ENCODE measurements at regions of chr12 and their contacts with region 1.

Region 1: DNA sequence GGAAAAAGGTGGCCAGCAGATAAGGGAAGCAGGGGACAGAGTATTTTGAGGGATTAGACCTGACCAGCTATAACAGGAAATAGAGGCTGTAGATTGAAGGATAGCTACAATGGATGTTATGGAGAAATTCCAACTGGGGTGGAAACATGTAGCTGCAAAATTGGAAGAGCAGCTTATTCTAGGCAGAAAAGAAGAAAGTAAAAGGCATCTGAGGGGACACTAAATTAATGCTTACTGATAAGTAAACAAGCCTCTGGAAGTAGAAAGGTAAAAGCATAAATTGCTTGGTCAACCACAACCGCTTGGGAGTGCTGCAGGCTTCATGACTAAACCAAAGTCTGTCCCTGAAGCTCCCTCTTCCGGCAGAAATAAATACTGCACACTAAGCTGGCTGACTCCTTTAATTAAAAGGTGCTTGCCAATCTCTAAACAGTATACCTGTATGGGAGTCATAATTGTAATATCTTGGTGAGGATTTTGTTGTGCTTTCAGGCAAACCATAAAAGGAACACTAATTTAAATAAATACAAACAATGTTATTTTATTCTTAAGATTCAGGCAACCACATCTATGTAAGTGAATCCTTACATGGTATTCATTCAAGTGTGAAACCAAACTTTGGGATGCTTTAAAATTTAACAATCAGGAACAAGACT is 7.7 kb downstream of the UBC start:
- DNase-seq: peak; percentile 93
- ATAC-seq: peak; percentile 88
- H3K4me3 Mint-ChIP-seq: no peak overlapping the region
- H3K27ac Mint-ChIP-seq: peak overlapping the region; percentile 28
- H3K4me1 Mint-ChIP-seq: peaks cover 25% of the 10 kb centered on the region
- H3K27me3 Mint-ChIP-seq: no peaks in the 10 kb centered on the region

Region 2: GRCh38 chr12:124655698-124656516 is 250.8 kb before region 1 on chr12:
- CTCF ChIA-PET with region 1: no interaction called
- POLR2A ChIA-PET with region 1: no interaction called
- intact Hi-C with region 1: no loop called
- DNase-seq: no peak
- ATAC-seq: no peak
- H3K4me3 Mint-ChIP-seq: no peak overlapping the region
- H3K27ac Mint-ChIP-seq: no peak overlapping the region
- H3K4me1 Mint-ChIP-seq: no peaks in the 10 kb centered on the region
- H3K27me3 Mint-ChIP-seq: peaks cover 3% of the 10 kb centered on the region

Region 3: DNA sequence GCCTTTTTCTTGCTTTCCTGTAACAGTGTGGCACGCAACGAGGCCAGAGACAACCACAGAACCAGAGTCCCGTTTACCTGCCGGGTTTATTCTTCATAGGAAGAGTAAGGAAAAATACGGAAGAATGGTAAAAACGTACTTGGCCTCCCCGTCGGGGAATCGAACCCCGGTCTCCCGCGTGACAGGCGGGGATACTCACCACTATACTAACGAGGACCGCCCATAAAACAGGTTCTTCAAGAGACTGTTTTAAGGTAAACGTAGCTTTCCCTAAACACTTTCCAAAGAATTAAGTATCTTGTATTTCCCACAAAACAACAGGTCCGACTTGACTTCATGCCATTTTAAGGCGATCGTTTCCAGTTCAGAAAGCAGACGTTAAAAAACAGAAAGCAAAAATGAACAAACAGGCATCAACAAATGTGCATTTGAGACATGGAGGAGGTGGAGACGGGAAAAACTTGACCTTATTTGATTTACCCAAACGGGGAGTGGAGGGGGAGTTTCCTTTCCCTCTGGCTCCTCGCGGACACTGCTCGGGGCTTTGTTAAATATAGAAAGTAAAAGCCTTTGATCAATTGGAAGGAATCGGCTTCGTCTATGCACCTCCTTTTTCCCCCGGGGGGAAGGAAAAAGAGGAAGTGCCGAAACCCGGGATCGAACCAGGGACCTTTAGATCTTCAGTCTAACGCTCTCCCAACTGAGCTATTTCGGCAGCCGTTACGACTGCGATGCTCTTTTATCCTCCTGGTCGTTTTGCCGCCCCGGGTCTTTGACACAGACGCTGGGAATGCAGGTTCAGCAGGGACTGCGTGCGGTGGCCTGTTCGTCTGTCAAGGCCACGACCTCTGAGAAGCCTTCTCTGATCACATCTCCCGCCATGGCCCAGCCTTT is 20.7 kb after region 1 on chr12:
- CTCF ChIA-PET with region 1: interaction called, 70 read pairs
- POLR2A ChIA-PET with region 1: interaction called, 8 read pairs
- intact Hi-C with region 1: no loop called
- DNase-seq: peak; percentile 96
- ATAC-seq: peak; percentile 81
- H3K4me3 Mint-ChIP-seq: peak overlapping the region; percentile 98
- H3K27ac Mint-ChIP-seq: peak overlapping the region; percentile 97
- H3K4me1 Mint-ChIP-seq: peaks cover 33% of the 10 kb centered on the region
- H3K27me3 Mint-ChIP-seq: peaks cover 2% of the 10 kb centered on the region

Region 4: GRCh38 chr12:124940549-124941527 is 34.1 kb after region 1 on chr12:
- CTCF ChIA-PET with region 1: interaction called, 104 read pairs
- POLR2A ChIA-PET with region 1: interaction called, 21 read pairs
- intact Hi-C with region 1: loop called (anchors 1 kb)
- DNase-seq: peak; percentile 95
- ATAC-seq: peak; percentile 39
- H3K4me3 Mint-ChIP-seq: no peak overlapping the region
- H3K27ac Mint-ChIP-seq: no peak overlapping the region
- H3K4me1 Mint-ChIP-seq: peaks cover 11% of the 10 kb centered on the region
- H3K27me3 Mint-ChIP-seq: no peaks in the 10 kb centered on the region

Region 5: DNA sequence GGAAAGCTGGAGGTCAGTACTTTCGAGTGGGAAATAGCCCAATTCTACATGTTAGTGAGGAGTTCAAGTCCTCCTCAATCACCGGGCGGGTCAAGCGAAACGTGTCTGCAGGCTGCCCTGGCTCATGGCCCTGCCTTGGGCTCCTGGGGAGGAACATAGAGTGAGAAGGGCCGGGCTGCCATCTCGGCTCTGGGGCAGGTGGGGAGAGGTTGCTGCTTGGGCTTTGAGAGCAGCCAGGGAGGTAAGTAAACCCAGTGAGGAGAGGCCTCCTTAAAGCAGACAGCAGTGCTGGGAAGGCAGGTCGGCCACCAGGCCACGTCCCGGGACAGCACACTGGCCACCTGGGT is 39.7 kb after region 1 on chr12:
- CTCF ChIA-PET with region 1: interaction called, 104 read pairs
- POLR2A ChIA-PET with region 1: interaction called, 21 read pairs
- intact Hi-C with region 1: no loop called
- DNase-seq: no peak
- ATAC-seq: no peak
- H3K4me3 Mint-ChIP-seq: no peak overlapping the region
- H3K27ac Mint-ChIP-seq: no peak overlapping the region
- H3K4me1 Mint-ChIP-seq: peaks cover 2% of the 10 kb centered on the region
- H3K27me3 Mint-ChIP-seq: no peaks in the 10 kb centered on the region

Region 6: GRCh38 chr12:125065021-125065795 is 158.5 kb after region 1 on chr12 and contains the start of gene AACS:
- CTCF ChIA-PET with region 1: no interaction called
- POLR2A ChIA-PET with region 1: no interaction called
- intact Hi-C with region 1: loop called in 1 of 2 experiments (anchors 5 kb)
- DNase-seq: peak; percentile 89
- ATAC-seq: peak; percentile 98
- H3K4me3 Mint-ChIP-seq: peak within 1 kb of the TSS; percentile 71
- H3K27ac Mint-ChIP-seq: peak within 1 kb of the TSS; percentile 37
- H3K4me1 Mint-ChIP-seq: peaks cover 13% of the 10 kb centered on the region
- H3K27me3 Mint-ChIP-seq: peaks cover 8% of the 10 kb centered on the region
- total RNA-seq, gene AACS: 13.9 to 16.6 TPM

Region 7: DNA sequence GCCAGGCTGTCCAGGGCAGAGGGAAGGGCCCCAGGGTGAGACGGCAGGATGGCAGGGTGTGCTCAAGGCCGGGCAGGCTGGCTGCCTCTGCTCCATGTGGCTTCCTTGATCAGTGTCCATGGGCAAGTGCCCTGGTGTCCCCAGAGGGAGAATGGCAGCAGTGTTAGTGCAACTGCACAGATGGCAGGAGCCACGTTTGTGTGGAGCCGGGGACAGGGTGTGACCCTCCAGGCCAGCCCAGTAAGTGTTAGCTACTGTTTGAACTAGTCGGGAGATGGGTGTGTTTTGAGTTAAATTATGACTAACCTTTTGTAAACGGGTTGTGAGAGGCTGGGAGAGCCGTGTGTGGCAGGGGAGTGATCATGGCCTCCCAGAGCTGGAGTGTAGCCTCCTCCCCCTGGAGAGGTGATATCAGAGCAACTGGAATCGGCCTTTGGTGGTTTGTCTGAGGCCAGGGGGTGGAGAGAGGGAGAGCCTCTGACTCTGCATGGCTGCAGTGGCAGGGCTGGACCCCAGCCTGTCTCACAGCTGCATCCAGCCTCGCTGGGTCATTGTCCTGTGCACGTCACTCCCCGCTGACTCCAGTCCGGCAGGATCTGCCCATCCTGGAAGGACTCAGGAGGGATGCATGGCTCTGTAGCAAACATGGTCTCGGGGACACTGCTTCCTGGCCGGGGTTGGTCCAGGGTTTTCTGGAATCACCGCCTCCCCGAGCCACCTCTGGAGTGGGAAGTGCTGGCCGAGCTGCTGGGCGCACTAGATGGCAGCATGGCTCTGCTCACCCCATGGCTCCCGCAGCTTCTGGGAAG is 186.3 kb after region 1 on chr12:
- CTCF ChIA-PET with region 1: no interaction called
- POLR2A ChIA-PET with region 1: no interaction called
- intact Hi-C with region 1: no loop called
- DNase-seq: no peak
- ATAC-seq: no peak
- H3K4me3 Mint-ChIP-seq: no peak overlapping the region
- H3K27ac Mint-ChIP-seq: no peak overlapping the region
- H3K4me1 Mint-ChIP-seq: peaks cover 6% of the 10 kb centered on the region
- H3K27me3 Mint-ChIP-seq: no peaks in the 10 kb centered on the region